RWPE1 (cell line): ENCODE measurements at regions of chr3 and their contacts with region 1.

Region 1: DNA sequence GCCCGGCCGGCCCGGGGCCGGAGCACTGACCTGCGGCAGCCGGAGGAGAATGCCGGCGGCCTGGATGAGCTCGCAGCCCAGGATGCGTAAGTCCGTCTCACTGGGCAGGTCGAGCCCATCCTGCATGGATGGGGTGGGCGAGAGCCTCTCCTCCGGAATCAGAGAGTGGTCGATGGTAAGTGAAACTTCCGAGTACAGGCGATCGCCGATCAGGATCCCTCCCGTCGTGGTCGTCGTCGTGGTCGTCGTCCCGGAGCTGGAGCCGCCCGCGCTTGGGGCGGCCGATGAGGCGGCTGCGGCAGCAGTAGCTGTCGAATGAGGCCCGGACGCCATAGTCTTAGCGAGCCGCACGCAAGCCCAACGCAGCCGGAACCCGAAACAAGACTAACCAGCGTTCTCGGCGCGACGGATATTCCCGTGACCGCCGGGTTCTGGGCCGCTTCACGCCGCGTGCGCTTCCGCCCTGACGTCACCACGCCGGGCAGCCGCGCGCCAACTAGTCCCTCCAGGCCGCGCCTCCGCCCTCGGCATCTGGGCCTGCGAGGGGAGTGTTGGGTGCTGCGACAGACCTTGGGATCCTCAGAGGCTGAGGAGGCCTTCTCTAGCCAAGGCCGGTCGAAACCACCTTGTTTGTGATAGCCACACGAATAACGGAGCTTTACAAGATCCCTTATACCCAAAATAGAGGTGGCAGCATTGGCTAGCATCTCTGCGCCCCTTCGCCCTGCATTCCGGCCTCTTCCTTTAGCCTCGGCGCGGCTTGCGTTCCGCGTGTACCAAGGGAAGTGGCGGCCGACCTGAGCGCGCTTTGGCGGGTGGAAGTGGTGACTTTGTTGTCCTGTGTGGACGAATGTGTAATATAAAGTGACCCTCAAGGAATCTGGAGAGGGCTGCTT is at the start of gene CCNL1:
- DNase-seq: peak; percentile 91
- H3K27ac ChIP-seq: peak within 1 kb of the TSS; percentile 99
- CTCF ChIP-seq: no peak

Region 2: GRCh38 chr3:157174649-157175498 is 14.9 kb after region 1 on chr3:
- CTCF ChIA-PET with region 1: no interaction called
- POLR2A ChIA-PET with region 1: interaction called, 76 read pairs
- DNase-seq: peak; percentile 95
- H3K27ac ChIP-seq: peak overlapping the region; percentile 91
- CTCF ChIP-seq: no peak